CD8-positive, alpha-beta T cell (primary cell): ENCODE measurements at regions of chr10 and their contacts with region 1.

Region 1: GRCh38 chr10:5977471-5978229 is at the start of gene IL15RA:
- DNase-seq: peak; percentile 54 to 91 (median 84)
- ATAC-seq: peak; percentile 78
- H3K4me3 ChIP-seq: peak within 1 kb of the TSS; percentile 92 to 95
- H3K4me3 Mint-ChIP-seq: peak within 1 kb of the TSS; percentile 97
- H3K27ac ChIP-seq: peak within 1 kb of the TSS; percentile 77 to 82
- H3K27ac Mint-ChIP-seq: peak within 1 kb of the TSS; percentile 96
- H3K4me1 ChIP-seq: peaks cover 12% of the 10 kb centered on the region
- H3K4me1 Mint-ChIP-seq: peaks cover 24% of the 10 kb centered on the region
- H3K27me3 ChIP-seq: no peaks in the 10 kb centered on the region
- H3K27me3 Mint-ChIP-seq: no peaks in the 10 kb centered on the region
- CTCF ChIP-seq: no peak
- total RNA-seq, gene IL15RA: 4.8 to 5.4 TPM

Region 2: GRCh38 chr10:5889624-5890451 is 87.8 kb before region 1 on chr10 and contains the starts of genes ANKRD16 and FBH1:
- CTCF ChIA-PET with region 1: no interaction called
- POLR2A ChIA-PET with region 1: interaction called, 15 read pairs
- intact Hi-C with region 1: loop called (anchors 2 kb)
- DNase-seq: peak; percentile 93 to 99 (median 97)
- ATAC-seq: peak; percentile 89
- H3K4me3 ChIP-seq: peak within 1 kb of the TSS; percentile 79 to 88
- H3K4me3 Mint-ChIP-seq: peak within 1 kb of the TSS; percentile 90
- H3K27ac ChIP-seq: peak within 1 kb of the TSS; percentile 47 to 63
- H3K27ac Mint-ChIP-seq: peak within 1 kb of the TSS; percentile 81
- H3K4me1 ChIP-seq: peaks cover 19% of the 10 kb centered on the region
- H3K4me1 Mint-ChIP-seq: peaks cover 50% of the 10 kb centered on the region
- H3K27me3 ChIP-seq: no peaks in the 10 kb centered on the region
- H3K27me3 Mint-ChIP-seq: no peaks in the 10 kb centered on the region
- CTCF ChIP-seq: no peak
- total RNA-seq, gene ANKRD16: 1.7 to 2.1 TPM
- total RNA-seq, gene FBH1: 23.5 to 24.8 TPM

Region 3: DNA sequence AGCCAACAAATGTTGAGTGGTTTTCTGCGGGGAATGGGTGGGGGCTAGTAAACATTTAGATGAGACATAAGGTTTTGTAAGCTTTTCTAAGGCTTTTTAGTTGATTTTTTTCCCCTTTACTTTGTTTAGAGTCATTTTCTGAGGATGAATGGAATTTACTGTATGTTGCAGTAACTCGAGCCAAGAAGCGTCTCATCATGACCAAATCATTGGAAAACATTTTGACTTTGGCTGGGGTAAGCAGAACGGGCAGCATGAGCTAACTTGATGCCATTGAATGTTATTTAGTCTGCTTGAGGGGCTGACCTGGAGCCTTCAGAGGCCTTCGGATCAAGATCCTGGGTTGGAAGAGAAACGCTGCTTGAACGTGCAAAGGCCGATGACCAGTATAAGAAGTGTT is 50.3 kb before region 1 on chr10:
- CTCF ChIA-PET with region 1: no interaction called
- POLR2A ChIA-PET with region 1: no interaction called
- intact Hi-C with region 1: loop called in 1 of 2 experiments (anchors 10 kb)
- DNase-seq: no peak
- ATAC-seq: no peak
- H3K4me3 ChIP-seq: no peak overlapping the region
- H3K4me3 Mint-ChIP-seq: no peak overlapping the region
- H3K27ac ChIP-seq: no peak overlapping the region
- H3K27ac Mint-ChIP-seq: no peak overlapping the region
- H3K4me1 ChIP-seq: no peaks in the 10 kb centered on the region
- H3K4me1 Mint-ChIP-seq: no peaks in the 10 kb centered on the region
- H3K27me3 ChIP-seq: no peaks in the 10 kb centered on the region
- H3K27me3 Mint-ChIP-seq: no peaks in the 10 kb centered on the region
- CTCF ChIP-seq: no peak

Region 4: GRCh38 chr10:6044060-6044459 is 66.4 kb after region 1 on chr10:
- CTCF ChIA-PET with region 1: no interaction called
- POLR2A ChIA-PET with region 1: no interaction called
- intact Hi-C with region 1: no loop called
- DNase-seq: peak in 2 of 9 experiments; percentile 40 to 49
- ATAC-seq: peak; percentile 44
- H3K4me3 ChIP-seq: no peak overlapping the region
- H3K4me3 Mint-ChIP-seq: peak overlapping the region; percentile 59
- H3K27ac ChIP-seq: no peak overlapping the region
- H3K27ac Mint-ChIP-seq: no peak overlapping the region
- H3K4me1 ChIP-seq: peaks cover 33% of the 10 kb centered on the region
- H3K4me1 Mint-ChIP-seq: peaks cover 52% of the 10 kb centered on the region
- H3K27me3 ChIP-seq: no peaks in the 10 kb centered on the region
- H3K27me3 Mint-ChIP-seq: no peaks in the 10 kb centered on the region
- CTCF ChIP-seq: no peak